Activated CD4-positive, alpha-beta memory T cell treated with anti-CD3 and anti-CD28 coated beads for 36 hours (primary cell): ENCODE measurements at regions of chr10 and their contacts with region 1.

Region 1: GRCh38 chr10:87861953-87862678 is 1.2 kb downstream of the KLLN start:
- DNase-seq: peak; percentile 96
- H3K4me3 Mint-ChIP-seq: peak overlapping the region; percentile 90
- H3K27ac Mint-ChIP-seq: peak overlapping the region; percentile 94
- H3K4me1 Mint-ChIP-seq: peaks cover 33% of the 10 kb centered on the region
- H3K27me3 Mint-ChIP-seq: no peaks in the 10 kb centered on the region

Region 2: GRCh38 chr10:87552248-87552929 is 309.7 kb before region 1 on chr10:
- CTCF ChIA-PET with region 1: no interaction called
- POLR2A ChIA-PET with region 1: no interaction called
- intact Hi-C with region 1: no loop called
- DNase-seq: no peak
- H3K4me3 Mint-ChIP-seq: no peak overlapping the region
- H3K27ac Mint-ChIP-seq: no peak overlapping the region
- H3K4me1 Mint-ChIP-seq: peaks cover 10% of the 10 kb centered on the region
- H3K27me3 Mint-ChIP-seq: no peaks in the 10 kb centered on the region

Region 3: GRCh38 chr10:87685832-87686574 is 176.1 kb before region 1 on chr10:
- CTCF ChIA-PET with region 1: no interaction called
- POLR2A ChIA-PET with region 1: no interaction called
- intact Hi-C with region 1: no loop called
- DNase-seq: no peak
- H3K4me3 Mint-ChIP-seq: no peak overlapping the region
- H3K27ac Mint-ChIP-seq: no peak overlapping the region
- H3K4me1 Mint-ChIP-seq: no peaks in the 10 kb centered on the region
- H3K27me3 Mint-ChIP-seq: peaks cover 2% of the 10 kb centered on the region

Region 4: GRCh38 chr10:87761892-87762291 is 100.2 kb before region 1 on chr10:
- CTCF ChIA-PET with region 1: no interaction called
- POLR2A ChIA-PET with region 1: no interaction called
- intact Hi-C with region 1: loop called (anchors 1 kb)
- DNase-seq: peak; percentile 75
- H3K4me3 Mint-ChIP-seq: no peak overlapping the region
- H3K27ac Mint-ChIP-seq: peak overlapping the region; percentile 72
- H3K4me1 Mint-ChIP-seq: peaks cover 31% of the 10 kb centered on the region
- H3K27me3 Mint-ChIP-seq: no peaks in the 10 kb centered on the region

Region 5: GRCh38 chr10:87979847-87980246 is 117.7 kb after region 1 on chr10:
- CTCF ChIA-PET with region 1: no interaction called
- POLR2A ChIA-PET with region 1: no interaction called
- intact Hi-C with region 1: no loop called
- DNase-seq: no peak
- H3K4me3 Mint-ChIP-seq: no peak overlapping the region
- H3K27ac Mint-ChIP-seq: no peak overlapping the region
- H3K4me1 Mint-ChIP-seq: peaks cover 6% of the 10 kb centered on the region
- H3K27me3 Mint-ChIP-seq: no peaks in the 10 kb centered on the region

Region 6: GRCh38 chr10:88064608-88065382 is 202.7 kb after region 1 on chr10:
- CTCF ChIA-PET with region 1: interaction called, 3 read pairs
- POLR2A ChIA-PET with region 1: interaction called, 6 read pairs
- intact Hi-C with region 1: loop called (anchors 2 kb)
- DNase-seq: peak; percentile 51
- H3K4me3 Mint-ChIP-seq: no peak overlapping the region
- H3K27ac Mint-ChIP-seq: peak overlapping the region; percentile 9
- H3K4me1 Mint-ChIP-seq: peaks cover 49% of the 10 kb centered on the region
- H3K27me3 Mint-ChIP-seq: peaks cover 14% of the 10 kb centered on the region

Region 7: DNA sequence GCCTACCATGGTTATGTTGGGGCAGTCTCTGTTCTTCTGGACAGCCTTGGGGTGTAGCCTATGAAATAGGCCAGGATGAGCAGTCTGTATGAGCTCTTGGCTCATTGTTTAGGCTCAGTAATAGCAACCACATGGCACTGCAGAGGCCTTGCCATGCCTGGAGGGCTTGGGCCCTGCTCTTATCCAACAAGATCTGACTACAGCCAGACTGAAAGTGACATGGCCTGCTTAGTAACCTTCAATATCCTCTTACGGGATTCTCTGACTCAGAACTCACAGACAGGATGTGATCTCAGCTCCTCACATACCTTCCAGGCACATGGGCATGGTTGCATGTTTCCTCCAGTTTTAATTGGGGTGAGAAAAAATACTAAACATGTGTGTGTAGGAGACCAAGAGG is 290.6 kb after region 1 on chr10:
- CTCF ChIA-PET with region 1: interaction called, 4 read pairs
- POLR2A ChIA-PET with region 1: no interaction called
- intact Hi-C with region 1: loop called (anchors 2 kb)
- DNase-seq: peak; percentile 77
- H3K4me3 Mint-ChIP-seq: no peak overlapping the region
- H3K27ac Mint-ChIP-seq: peak overlapping the region; percentile 89
- H3K4me1 Mint-ChIP-seq: peaks cover 22% of the 10 kb centered on the region
- H3K27me3 Mint-ChIP-seq: no peaks in the 10 kb centered on the region

Region 8: DNA sequence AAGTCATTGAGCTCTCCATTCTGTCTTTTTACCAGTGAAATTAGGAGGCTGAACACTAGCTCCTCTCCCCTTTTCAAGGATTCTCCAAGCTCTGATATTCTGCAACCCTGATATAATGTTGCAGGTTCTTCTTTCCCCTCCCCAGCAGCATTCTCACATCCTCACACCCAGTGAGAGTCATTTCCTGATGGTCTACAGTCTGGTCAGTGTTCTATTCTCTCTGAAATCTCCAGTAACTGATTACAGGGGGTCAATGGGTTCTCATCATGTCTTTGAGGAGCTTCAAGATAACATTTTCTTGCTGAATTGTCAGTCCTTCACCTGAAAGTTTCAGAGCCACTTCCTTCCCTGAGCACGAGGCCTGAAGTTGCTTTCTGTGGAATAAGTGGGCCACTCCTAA is 300.7 kb after region 1 on chr10:
- CTCF ChIA-PET with region 1: no interaction called
- POLR2A ChIA-PET with region 1: no interaction called
- intact Hi-C with region 1: no loop called
- DNase-seq: no peak
- H3K4me3 Mint-ChIP-seq: no peak overlapping the region
- H3K27ac Mint-ChIP-seq: no peak overlapping the region
- H3K4me1 Mint-ChIP-seq: peaks cover 9% of the 10 kb centered on the region
- H3K27me3 Mint-ChIP-seq: no peaks in the 10 kb centered on the region

Region 9: DNA sequence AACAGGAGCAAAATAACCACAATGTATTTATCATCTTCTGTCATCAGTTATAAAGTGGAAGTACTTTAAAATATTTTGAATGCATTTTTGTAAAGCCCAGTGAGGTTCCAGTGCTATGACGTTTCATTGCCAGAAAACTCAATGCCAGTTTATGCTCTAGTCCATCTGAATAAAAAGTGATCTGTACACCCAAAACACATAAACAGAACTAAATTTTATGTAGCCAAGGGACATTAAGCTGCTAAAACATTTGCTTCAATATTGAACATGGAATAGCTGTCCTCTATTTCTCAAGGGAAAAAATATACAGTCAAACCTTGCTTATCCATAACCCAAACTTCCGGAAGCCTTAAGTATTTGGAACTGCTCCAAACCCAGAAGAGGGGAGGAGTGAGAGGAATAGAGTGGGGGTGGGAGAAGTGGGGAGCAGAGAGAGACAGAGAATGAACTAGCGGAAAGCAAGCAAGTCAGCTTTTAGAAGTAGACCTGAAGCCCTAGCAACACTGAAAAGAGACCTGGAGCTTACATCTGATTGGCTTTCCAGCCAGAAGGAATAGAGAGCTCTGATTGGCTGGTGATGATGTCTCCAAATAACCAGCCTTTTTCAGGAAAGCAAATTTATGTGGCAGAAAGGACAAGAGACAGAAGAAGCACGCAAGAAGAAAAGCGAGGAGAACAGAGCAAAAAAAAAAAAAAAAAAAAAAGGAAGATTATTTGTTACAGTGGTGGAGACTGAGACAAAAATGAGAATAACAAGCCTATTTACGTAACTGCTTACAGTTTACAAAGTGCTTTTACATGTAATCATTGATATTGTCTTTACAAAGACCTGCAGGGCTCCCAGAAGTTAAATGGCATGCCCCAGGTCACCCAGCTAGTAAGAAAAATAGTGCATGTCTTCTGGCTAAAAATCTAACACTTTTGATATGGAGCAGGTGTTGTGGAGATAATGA is 525.0 kb after region 1 on chr10:
- CTCF ChIA-PET with region 1: interaction called, 34 read pairs
- POLR2A ChIA-PET with region 1: interaction called, 10 read pairs
- intact Hi-C with region 1: loop called (anchors 1 kb)
- DNase-seq: no peak
- H3K4me3 Mint-ChIP-seq: no peak overlapping the region
- H3K27ac Mint-ChIP-seq: peak overlapping the region; percentile 42
- H3K4me1 Mint-ChIP-seq: peaks cover 16% of the 10 kb centered on the region
- H3K27me3 Mint-ChIP-seq: no peaks in the 10 kb centered on the region

Region 10: GRCh38 chr10:88820748-88821389 is 958.8 kb after region 1 on chr10:
- CTCF ChIA-PET with region 1: no interaction called
- POLR2A ChIA-PET with region 1: no interaction called
- intact Hi-C with region 1: loop called (anchors 10 kb)
- DNase-seq: no peak
- H3K4me3 Mint-ChIP-seq: no peak overlapping the region
- H3K27ac Mint-ChIP-seq: no peak overlapping the region
- H3K4me1 Mint-ChIP-seq: peaks cover 20% of the 10 kb centered on the region
- H3K27me3 Mint-ChIP-seq: no peaks in the 10 kb centered on the region

Region 11: GRCh38 chr10:89251409-89252224 is 1389.5 kb after region 1 on chr10 and contains the start of gene LIPA:
- CTCF ChIA-PET with region 1: no interaction called
- POLR2A ChIA-PET with region 1: no interaction called
- intact Hi-C with region 1: loop called (anchors 5 kb)
- DNase-seq: peak; percentile 96
- H3K4me3 Mint-ChIP-seq: peak within 1 kb of the TSS; percentile 83
- H3K27ac Mint-ChIP-seq: peak within 1 kb of the TSS; percentile 46
- H3K4me1 Mint-ChIP-seq: peaks cover 30% of the 10 kb centered on the region
- H3K27me3 Mint-ChIP-seq: no peaks in the 10 kb centered on the region
- total RNA-seq, gene LIPA: 22.7 to 23.8 TPM